ENCODE measurements at regions of chr10 and their contacts with region 1.

Region 1: GRCh38 chr10:29496341-29497162 is 138.2 kb downstream of the SVIL start:
- DNase-seq: peak; percentile 73
- ATAC-seq: peak; percentile 73
- H3K4me3 Mint-ChIP-seq: no peak overlapping the region
- H3K27ac Mint-ChIP-seq: no peak overlapping the region
- H3K4me1 Mint-ChIP-seq: no peaks in the 10 kb centered on the region
- H3K27me3 Mint-ChIP-seq: no peaks in the 10 kb centered on the region

Region 2: GRCh38 chr10:29245476-29245875 is 251.1 kb before region 1 on chr10:
- CTCF ChIA-PET with region 1: no interaction called
- POLR2A ChIA-PET with region 1: no interaction called
- DNase-seq: no peak
- ATAC-seq: no peak
- H3K4me3 Mint-ChIP-seq: no peak overlapping the region
- H3K27ac Mint-ChIP-seq: no peak overlapping the region
- H3K4me1 Mint-ChIP-seq: no peaks in the 10 kb centered on the region
- H3K27me3 Mint-ChIP-seq: peaks cover 2% of the 10 kb centered on the region

Region 3: GRCh38 chr10:29386342-29386999 is 110.1 kb before region 1 on chr10:
- CTCF ChIA-PET with region 1: interaction called, 18 read pairs
- POLR2A ChIA-PET with region 1: no interaction called
- DNase-seq: peak; percentile 38
- ATAC-seq: peak; percentile 64
- H3K4me3 Mint-ChIP-seq: no peak overlapping the region
- H3K27ac Mint-ChIP-seq: no peak overlapping the region
- H3K4me1 Mint-ChIP-seq: peaks cover 19% of the 10 kb centered on the region
- H3K27me3 Mint-ChIP-seq: peaks cover 5% of the 10 kb centered on the region

Region 4: GRCh38 chr10:29443745-29444523 is 52.6 kb before region 1 on chr10:
- CTCF ChIA-PET with region 1: interaction called, 22 read pairs
- POLR2A ChIA-PET with region 1: no interaction called
- DNase-seq: no peak
- ATAC-seq: no peak
- H3K4me3 Mint-ChIP-seq: no peak overlapping the region
- H3K27ac Mint-ChIP-seq: no peak overlapping the region
- H3K4me1 Mint-ChIP-seq: peaks cover 13% of the 10 kb centered on the region
- H3K27me3 Mint-ChIP-seq: no peaks in the 10 kb centered on the region

Region 5: GRCh38 chr10:29470355-29470705 is 26.2 kb before region 1 on chr10:
- CTCF ChIA-PET with region 1: interaction called, 16 read pairs
- POLR2A ChIA-PET with region 1: no interaction called
- DNase-seq: peak; percentile 44
- ATAC-seq: no peak
- H3K4me3 Mint-ChIP-seq: no peak overlapping the region
- H3K27ac Mint-ChIP-seq: no peak overlapping the region
- H3K4me1 Mint-ChIP-seq: peaks cover 18% of the 10 kb centered on the region
- H3K27me3 Mint-ChIP-seq: no peaks in the 10 kb centered on the region

Region 6: DNA sequence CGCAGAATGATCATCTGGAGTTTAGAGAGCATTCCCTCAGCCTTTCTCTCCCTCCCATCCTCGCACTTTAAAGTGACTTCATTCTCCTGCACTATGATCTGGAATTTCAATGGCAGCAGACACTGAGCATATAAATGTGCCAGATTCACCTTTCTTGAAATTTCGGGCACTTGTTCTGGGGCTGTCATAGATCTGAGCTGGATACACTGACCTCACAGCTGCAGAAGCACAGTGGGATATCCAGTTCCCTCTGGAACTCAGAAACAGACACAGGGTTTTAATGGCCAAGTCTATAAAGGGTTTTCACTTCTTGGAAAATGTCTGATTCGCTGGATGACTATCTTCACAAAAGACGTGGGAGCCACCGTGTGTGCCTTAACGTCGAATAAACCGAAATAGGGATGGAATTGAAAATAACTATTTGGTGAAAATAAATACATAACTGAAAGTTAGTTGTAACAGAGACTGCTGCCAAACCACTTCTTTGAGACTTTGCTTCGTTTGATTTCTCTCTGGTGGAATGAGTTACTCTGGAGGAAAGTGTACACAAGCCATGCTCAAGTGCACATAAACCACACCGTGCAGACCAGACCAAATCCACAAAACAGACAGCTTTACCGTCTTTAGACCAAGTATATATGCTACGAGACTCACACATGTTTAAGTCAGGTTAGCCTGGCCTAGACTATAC is 12.1 kb after region 1 on chr10:
- CTCF ChIA-PET with region 1: interaction called, 21 read pairs
- POLR2A ChIA-PET with region 1: no interaction called
- DNase-seq: no peak
- ATAC-seq: no peak
- H3K4me3 Mint-ChIP-seq: no peak overlapping the region
- H3K27ac Mint-ChIP-seq: no peak overlapping the region
- H3K4me1 Mint-ChIP-seq: peaks cover 5% of the 10 kb centered on the region
- H3K27me3 Mint-ChIP-seq: no peaks in the 10 kb centered on the region